Activated CD8-positive, alpha-beta T cell treated with anti-CD3 and anti-CD28 coated beads for 36 hours (primary cell): ENCODE measurements at regions of chr6 and their contacts with region 1.

Region 1: GRCh38 chr6:52284460-52285176 is at the start of gene MCM3:
- DNase-seq: peak; percentile 99
- ATAC-seq: peak; percentile 97
- H3K4me3 Mint-ChIP-seq: no peak within 1 kb of the TSS
- H3K27ac Mint-ChIP-seq: peak within 1 kb of the TSS; percentile 64
- H3K4me1 Mint-ChIP-seq: peaks cover 52% of the 10 kb centered on the region
- H3K27me3 Mint-ChIP-seq: no peaks in the 10 kb centered on the region
- CTCF ChIP-seq: no peak
- total RNA-seq, gene MCM3: 291 to 293 TPM

Region 2: DNA sequence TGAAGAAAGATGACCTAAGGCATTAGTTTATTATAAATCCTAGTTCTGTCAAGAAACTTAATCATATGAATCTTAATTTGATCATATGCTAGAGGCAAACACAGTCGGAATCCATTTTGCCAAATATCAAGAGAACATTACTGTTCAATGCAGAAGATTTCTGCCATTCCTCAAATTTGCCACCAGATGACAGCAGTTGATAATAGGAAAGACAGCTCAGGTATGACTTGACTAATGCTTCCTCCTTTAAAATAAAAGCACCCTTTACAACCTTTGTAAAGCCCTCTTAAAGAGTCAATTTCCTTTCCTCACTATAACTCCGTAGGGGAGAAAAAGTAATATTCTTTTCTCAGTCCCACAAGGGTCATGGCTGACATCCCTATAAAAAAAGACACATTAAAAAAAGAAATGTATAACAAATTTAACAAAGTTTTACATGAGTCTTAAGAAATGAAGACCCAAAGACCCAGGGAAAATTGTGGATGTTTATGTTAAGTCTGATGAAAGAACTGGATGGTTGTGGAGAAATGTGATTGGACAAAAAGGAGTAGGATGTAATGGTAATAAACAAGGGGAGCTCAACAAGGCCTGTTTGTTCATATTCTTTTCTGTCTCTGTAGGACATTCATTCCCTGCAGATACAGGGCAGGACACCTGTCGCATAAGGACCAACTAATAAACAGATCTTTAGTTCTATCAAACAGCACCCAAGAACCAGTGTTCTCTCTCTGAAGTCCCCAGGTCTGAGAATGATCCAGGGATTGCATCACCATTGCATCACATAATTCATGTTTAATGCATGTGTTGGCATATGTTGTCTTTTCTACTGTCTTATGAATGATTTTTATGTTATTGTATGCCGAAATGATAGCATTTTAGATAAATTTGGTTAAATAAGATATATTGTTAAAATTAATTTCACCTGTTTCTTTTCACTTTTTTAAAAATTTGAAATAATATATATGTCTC is 121.4 kb before region 1 on chr6:
- CTCF ChIA-PET with region 1: interaction called, 16 read pairs
- POLR2A ChIA-PET with region 1: interaction called, 4 read pairs
- intact Hi-C with region 1: no loop called
- DNase-seq: no peak
- ATAC-seq: peak; percentile 48
- H3K4me3 Mint-ChIP-seq: no peak overlapping the region
- H3K27ac Mint-ChIP-seq: peak overlapping the region; percentile 90
- H3K4me1 Mint-ChIP-seq: peaks cover 34% of the 10 kb centered on the region
- H3K27me3 Mint-ChIP-seq: peaks cover 21% of the 10 kb centered on the region
- CTCF ChIP-seq: peak; percentile 75

Region 3: GRCh38 chr6:52271852-52272460 is 12.7 kb before region 1 on chr6:
- CTCF ChIA-PET with region 1: interaction called, 7 read pairs
- POLR2A ChIA-PET with region 1: interaction called, 54 read pairs
- intact Hi-C with region 1: no loop called
- DNase-seq: no peak
- ATAC-seq: no peak
- H3K4me3 Mint-ChIP-seq: no peak overlapping the region
- H3K27ac Mint-ChIP-seq: peak overlapping the region; percentile 6
- H3K4me1 Mint-ChIP-seq: peaks cover 8% of the 10 kb centered on the region
- H3K27me3 Mint-ChIP-seq: no peaks in the 10 kb centered on the region
- CTCF ChIP-seq: no peak

Region 4: DNA sequence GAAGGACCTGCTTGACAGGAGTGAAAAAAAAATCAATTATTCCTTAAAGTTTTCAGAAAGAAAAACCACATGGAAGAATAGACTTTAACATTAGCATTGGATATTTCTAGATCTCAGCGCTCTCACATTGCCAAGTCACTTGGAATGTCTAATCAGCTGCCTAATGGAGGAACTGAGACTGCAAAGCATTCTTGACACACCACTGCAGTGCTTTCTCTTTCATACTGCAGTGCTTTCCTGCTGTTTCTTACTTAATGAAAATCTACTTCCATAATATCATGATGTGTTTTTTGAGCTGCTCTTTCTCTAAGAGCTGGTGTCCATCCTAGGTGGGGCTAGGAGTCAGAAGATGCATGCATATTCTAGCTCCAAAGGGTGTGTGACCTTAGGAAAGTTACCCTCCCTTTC is 20.4 kb after region 1 on chr6:
- CTCF ChIA-PET with region 1: interaction called, 51 read pairs
- POLR2A ChIA-PET with region 1: interaction called, 10 read pairs
- intact Hi-C with region 1: no loop called
- DNase-seq: no peak
- ATAC-seq: peak; percentile 42
- H3K4me3 Mint-ChIP-seq: peak overlapping the region; percentile 57
- H3K27ac Mint-ChIP-seq: peak overlapping the region; percentile 92
- H3K4me1 Mint-ChIP-seq: peaks cover 67% of the 10 kb centered on the region
- H3K27me3 Mint-ChIP-seq: no peaks in the 10 kb centered on the region
- CTCF ChIP-seq: no peak

Region 5: GRCh38 chr6:52361945-52362442 is 77.4 kb after region 1 on chr6 and contains the start of gene PAQR8:
- CTCF ChIA-PET with region 1: interaction called, 102 read pairs
- POLR2A ChIA-PET with region 1: interaction called, 45 read pairs
- intact Hi-C with region 1: loop called (anchors 5 kb)
- DNase-seq: peak; percentile 78
- ATAC-seq: peak; percentile 89
- H3K4me3 Mint-ChIP-seq: peak within 1 kb of the TSS; percentile 100
- H3K27ac Mint-ChIP-seq: peak within 1 kb of the TSS; percentile 98
- H3K4me1 Mint-ChIP-seq: peaks cover 39% of the 10 kb centered on the region
- H3K27me3 Mint-ChIP-seq: no peaks in the 10 kb centered on the region
- CTCF ChIP-seq: no peak
- total RNA-seq, gene PAQR8: 12.9 to 13.7 TPM

Region 6: GRCh38 chr6:52399511-52400312 is 115.1 kb after region 1 on chr6:
- CTCF ChIA-PET with region 1: interaction called, 201 read pairs
- POLR2A ChIA-PET with region 1: interaction called, 24 read pairs
- intact Hi-C with region 1: loop called (anchors 2 kb)
- DNase-seq: peak; percentile 57
- ATAC-seq: peak; percentile 51
- H3K4me3 Mint-ChIP-seq: no peak overlapping the region
- H3K27ac Mint-ChIP-seq: peak overlapping the region; percentile 78
- H3K4me1 Mint-ChIP-seq: peaks cover 65% of the 10 kb centered on the region
- H3K27me3 Mint-ChIP-seq: no peaks in the 10 kb centered on the region
- CTCF ChIP-seq: peak; percentile 91

Region 7: DNA sequence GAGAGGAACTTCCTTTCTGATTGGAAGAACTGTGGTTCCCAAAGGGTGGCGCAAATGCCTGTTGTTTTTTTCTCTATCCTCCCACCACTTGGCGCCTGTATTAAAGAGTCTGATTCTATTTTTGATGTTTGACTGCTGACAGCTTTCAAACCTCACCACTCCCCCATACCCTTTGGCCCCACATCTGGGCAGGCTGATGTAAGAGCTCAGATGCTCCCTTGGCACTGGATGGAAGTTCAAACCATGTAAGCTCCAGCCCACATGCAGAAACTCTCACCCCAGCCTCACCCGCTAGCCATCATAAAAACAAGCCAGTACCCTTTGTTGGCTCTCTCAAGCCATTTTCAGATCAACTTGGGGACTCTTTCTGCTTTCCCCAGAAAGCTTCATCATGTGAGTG is 366.3 kb after region 1 on chr6:
- CTCF ChIA-PET with region 1: interaction called, 13 read pairs
- POLR2A ChIA-PET with region 1: no interaction called
- intact Hi-C with region 1: no loop called
- DNase-seq: no peak
- ATAC-seq: no peak
- H3K4me3 Mint-ChIP-seq: no peak overlapping the region
- H3K27ac Mint-ChIP-seq: no peak overlapping the region
- H3K4me1 Mint-ChIP-seq: peaks cover 6% of the 10 kb centered on the region
- H3K27me3 Mint-ChIP-seq: peaks cover 3% of the 10 kb centered on the region
- CTCF ChIP-seq: no peak